PC-9 (cell line): ENCODE measurements at regions of chr2 and their contacts with region 1.

Region 1: DNA sequence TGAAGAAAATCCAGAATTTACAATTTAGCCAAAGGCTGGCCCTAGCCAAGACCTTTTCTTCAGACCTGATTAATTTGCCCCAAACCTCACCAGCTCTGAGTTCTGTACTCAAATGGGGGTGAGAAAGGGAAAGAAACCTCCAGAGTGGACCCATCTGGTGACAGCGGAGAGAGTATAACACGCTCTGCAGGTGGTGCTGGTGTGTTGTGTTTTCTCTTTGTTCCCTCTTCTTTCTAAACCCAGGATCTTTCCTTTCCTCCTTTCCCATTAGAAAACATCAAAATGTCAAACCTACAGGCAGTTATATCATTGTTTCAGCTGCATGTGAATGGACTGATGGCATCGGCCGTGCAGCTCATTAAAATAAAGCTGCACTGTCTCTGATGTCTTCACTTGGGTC is 253.3 kb upstream of the SP5 start:
- DNase-seq: no peak
- H3K4me3 ChIP-seq: no peak overlapping the region
- H3K27ac ChIP-seq: no peak overlapping the region
- H3K4me1 ChIP-seq: peaks cover 14% of the 10 kb centered on the region
- H3K27me3 ChIP-seq: no peaks in the 10 kb centered on the region
- CTCF ChIP-seq: no peak

Region 2: DNA sequence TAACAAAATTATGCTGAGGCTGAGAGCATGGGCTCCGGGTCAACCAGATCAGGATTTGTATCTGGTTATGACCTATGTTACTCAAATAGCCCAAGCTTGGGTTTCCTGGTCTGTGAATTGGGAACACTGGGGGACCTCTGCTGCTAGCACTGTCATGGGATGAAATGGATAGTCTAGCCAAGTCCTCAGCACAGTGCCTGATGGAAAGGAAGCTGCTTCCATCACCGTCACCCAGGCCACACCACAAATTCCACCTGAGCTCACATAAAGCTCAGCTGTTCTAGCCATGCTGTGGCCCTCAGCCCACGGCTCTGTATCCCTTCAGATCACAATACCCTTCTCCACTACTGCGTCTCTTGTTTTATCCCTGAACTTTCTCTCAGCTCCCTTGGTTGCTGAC is 73.7 kb after region 1 on chr2:
- CTCF ChIA-PET with region 1: interaction called, 10 read pairs
- POLR2A ChIA-PET with region 1: no interaction called
- intact Hi-C with region 1: no loop called
- DNase-seq: no peak
- H3K4me3 ChIP-seq: no peak overlapping the region
- H3K27ac ChIP-seq: no peak overlapping the region
- H3K4me1 ChIP-seq: no peaks in the 10 kb centered on the region
- H3K27me3 ChIP-seq: no peaks in the 10 kb centered on the region
- CTCF ChIP-seq: no peak